Dorsolateral prefrontal cortex (tissue), 120 donors: ENCODE measurements at regions of chr14 and their contacts with region 1.

Region 1: GRCh38 chr14:65170768-65171507 is 68.6 kb upstream of the MAX start:
- DNase-seq: peak; percentile 18 to 78 (median 60)
- H3K4me3 ChIP-seq: peak overlapping the region; percentile 30 to 75 (median 54)
- H3K27ac ChIP-seq: peak overlapping the region in 58 of 59 donors; percentile 59 to 98 (median 91)
- H3K27me3 ChIP-seq: no peaks in the 10 kb centered on the region
- CTCF ChIP-seq: peak in 46 of 56 donors; percentile 4 to 66 (median 42)

Region 2: DNA sequence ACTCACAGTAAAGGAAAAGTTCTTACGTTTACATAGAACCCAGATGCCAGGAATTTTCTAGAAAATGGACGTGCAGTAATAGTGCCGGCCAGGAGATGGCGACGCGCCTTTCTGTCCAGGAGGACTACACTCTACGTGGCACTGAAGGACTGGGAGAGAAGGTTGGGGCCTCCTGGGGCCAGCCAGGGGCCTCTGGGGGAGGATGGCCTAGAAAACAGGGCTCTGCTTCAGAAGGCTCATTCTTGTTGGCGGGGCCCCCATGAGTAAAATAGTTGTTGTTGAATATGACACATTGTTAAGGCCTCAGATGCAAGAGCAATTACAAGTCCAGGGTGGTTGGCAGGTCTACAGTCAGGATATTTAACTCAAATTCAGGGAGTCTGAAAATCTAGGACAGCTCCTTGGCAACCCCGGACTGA is 51.5 kb after region 1 on chr14:
- intact Hi-C with region 1: loop called in 1 of 2 experiments (anchors 5 kb)
- DNase-seq: peak in 7 of 10 donors; percentile 48 to 72 (median 64)
- H3K4me3 ChIP-seq: no peak overlapping the region
- H3K27ac ChIP-seq: peak overlapping the region in 58 of 59 donors; percentile 6 to 100 (median 98)
- H3K27me3 ChIP-seq: no peaks in the 10 kb centered on the region
- CTCF ChIP-seq: peak; percentile 41 to 83 (median 69)

Region 3: GRCh38 chr14:65229751-65230749 is 59.1 kb after region 1 on chr14:
- intact Hi-C with region 1: loop called in 1 of 2 experiments (anchors 1 kb)
- DNase-seq: peak in 9 of 10 donors; percentile 52 to 94 (median 80)
- H3K4me3 ChIP-seq: peak overlapping the region in 57 of 59 donors; percentile 5 to 63 (median 42)
- H3K27ac ChIP-seq: peak overlapping the region; percentile 93 to 100 (median 98)
- H3K27me3 ChIP-seq: no peaks in the 10 kb centered on the region
- CTCF ChIP-seq: peak in 2 of 56 donors; percentile 12 to 20

Region 4: DNA sequence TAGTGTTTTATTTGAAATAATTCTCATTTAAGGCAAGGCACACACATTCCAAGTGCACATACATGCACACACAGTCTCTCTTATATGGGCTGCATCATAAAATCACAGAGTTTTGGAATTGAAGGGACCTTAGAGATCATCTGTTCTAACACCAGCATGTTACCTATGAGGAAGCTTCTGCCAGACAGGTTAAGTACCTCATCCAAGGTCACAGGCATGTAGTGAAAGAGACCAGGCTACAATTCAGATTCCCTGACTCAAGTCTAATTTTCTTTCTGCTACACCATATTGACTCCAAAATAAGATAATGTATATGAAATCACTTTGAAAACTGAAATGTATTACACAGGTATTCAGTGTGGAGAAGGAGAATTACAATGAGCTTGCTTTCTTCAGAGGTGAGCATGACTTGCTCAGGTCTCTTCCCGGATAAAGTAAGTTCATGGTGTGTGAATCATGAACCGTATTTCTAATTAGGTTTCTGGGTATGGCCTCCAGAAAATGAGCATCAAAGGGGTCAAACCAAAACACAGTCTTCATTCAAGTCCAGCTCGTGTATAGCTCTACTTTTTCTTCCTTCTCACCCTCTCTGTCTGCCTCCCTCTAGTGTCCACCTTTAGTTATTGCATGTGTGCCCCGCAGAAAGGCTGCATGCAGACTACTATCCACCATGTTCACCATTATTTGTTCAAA is 653.5 kb after region 1 on chr14:
- intact Hi-C with region 1: loop called in 1 of 2 experiments (anchors 5 kb)
- DNase-seq: peak in 7 of 10 donors; percentile 29 to 57 (median 46)
- H3K4me3 ChIP-seq: no peak overlapping the region
- H3K27ac ChIP-seq: no peak overlapping the region
- H3K27me3 ChIP-seq: no peaks in the 10 kb centered on the region
- CTCF ChIP-seq: peak; percentile 76 to 97 (median 91)